ENCODE measurements at regions of chr6 and their contacts with region 1.

Region 1: DNA sequence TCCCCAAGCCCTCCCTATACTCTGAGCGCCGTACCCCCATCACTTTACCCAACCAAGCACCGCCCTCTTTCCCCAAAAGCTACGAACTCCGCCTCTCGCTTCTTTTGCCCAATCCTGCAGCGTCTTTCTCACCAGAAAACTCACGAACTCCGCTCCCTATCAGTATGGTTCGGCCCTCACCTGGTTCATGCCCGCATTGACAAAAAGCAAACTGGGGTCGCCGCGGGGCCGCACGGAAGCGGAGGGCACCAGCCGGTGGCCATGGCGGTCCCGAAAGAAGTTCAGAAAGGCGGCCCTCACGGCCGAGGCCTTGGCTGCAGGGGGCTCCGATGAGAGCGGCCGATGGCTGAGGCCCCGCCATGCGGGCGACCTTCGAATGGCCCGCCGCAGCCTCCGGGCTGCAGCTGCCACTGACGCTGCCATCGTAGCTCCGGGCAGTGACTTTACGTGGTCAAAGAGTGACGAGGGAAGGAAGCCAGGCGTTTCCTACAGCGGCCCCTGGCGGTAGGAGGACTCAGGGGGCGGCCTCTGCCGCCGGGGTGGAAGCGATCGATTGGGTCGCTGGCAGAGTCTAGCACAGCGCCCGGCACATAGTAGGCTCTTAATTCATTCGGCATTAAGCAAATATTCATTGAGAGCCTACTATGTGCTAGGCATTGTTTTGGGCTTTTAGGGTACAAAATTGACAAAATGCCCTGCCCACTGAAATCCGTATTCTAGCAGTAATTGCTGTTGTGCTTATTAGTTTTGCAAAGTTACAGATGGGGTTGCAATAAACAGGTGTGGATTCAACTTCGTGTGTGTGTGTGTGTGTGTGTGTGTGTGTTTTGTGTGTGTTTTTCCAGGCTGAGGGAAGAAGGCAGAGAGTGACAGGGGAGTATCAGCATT is at the start of gene AARS2:
- DNase-seq: peak; percentile 56 to 82
- ATAC-seq: peak; percentile 98 to 99
- H3K4me3 ChIP-seq: peak within 1 kb of the TSS; percentile 76
- H3K27ac ChIP-seq: peak within 1 kb of the TSS; percentile 80 to 99
- H3K4me1 ChIP-seq: peaks cover 7% of the 10 kb centered on the region; the same call in 2 of the 3 replicates
- CTCF ChIP-seq: peak; percentile 79
- EP300 ChIP-seq: no peak
- POLR2A ChIP-seq: peak; percentile 85
- RAD21 ChIP-seq: no peak; a peak in 1 of 5 replicates
- polyA plus RNA-seq, gene AARS2: 4.0 and 4.3 TPM in 2 replicates

Region 2: DNA sequence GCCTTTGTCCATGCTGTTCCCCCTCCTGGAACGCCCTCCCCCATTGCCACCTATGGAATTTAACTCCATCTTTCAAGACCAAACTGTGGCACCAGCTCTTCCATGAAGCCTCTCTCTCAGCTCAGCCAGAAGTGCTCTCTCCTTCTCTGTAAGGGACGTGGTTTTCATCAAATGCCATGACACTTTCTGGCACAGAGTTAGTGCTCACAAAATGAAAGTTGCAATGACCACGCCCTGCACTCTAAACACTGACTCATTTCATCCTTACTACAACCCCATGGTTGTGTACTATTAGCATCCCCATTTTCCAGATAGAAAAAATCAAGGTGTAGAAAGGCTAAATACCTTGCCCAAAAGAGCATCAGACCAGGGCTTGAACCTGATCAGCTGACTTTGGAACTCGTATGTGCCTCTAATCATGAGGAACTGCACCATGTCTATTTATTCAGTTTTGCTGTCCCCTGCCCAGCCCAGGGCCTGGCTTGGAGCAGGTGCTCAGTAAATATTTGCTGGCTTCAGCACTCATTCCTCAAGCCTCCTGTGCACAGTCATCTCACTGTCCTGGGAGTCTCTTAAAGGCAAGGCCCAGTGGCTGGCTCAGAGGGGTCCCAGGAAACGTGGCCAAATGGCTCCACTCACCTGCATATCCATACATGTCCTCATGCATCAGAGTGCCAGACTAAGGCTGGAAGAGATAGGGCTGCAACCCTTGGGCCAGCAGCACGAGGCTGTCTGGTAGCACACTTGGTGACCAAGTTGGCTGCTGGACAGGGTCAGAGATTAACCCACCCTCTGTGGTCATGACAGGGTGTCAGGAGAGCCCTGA is 263.8 kb before region 1 on chr6:
- CTCF ChIA-PET with region 1: no interaction called
- POLR2A ChIA-PET with region 1: no interaction called
- DNase-seq: no peak
- ATAC-seq: no peak
- H3K4me3 ChIP-seq: no peak overlapping the region
- H3K27ac ChIP-seq: peak overlapping the region; percentile 89 to 97
- H3K4me1 ChIP-seq: peaks cover 93% of the 10 kb centered on the region
- CTCF ChIP-seq: no peak
- EP300 ChIP-seq: no peak
- POLR2A ChIP-seq: no peak
- RAD21 ChIP-seq: no peak

Region 3: GRCh38 chr6:44201638-44202303 is 111.4 kb before region 1 on chr6:
- CTCF ChIA-PET with region 1: no interaction called
- POLR2A ChIA-PET with region 1: no interaction called
- DNase-seq: no peak
- ATAC-seq: no peak
- H3K4me3 ChIP-seq: no peak overlapping the region
- H3K27ac ChIP-seq: no peak overlapping the region
- H3K4me1 ChIP-seq: peaks cover 12% of the 10 kb centered on the region
- CTCF ChIP-seq: no peak
- EP300 ChIP-seq: no peak
- POLR2A ChIP-seq: no peak
- RAD21 ChIP-seq: no peak

Region 4: GRCh38 chr6:44291841-44292240 is 21.3 kb before region 1 on chr6:
- CTCF ChIA-PET with region 1: interaction called, 11 read pairs
- POLR2A ChIA-PET with region 1: no interaction called
- DNase-seq: no peak
- ATAC-seq: peak in 1 of 2 experiments; percentile 49; a peak in 2 of 6 replicates
- H3K4me3 ChIP-seq: no peak overlapping the region
- H3K27ac ChIP-seq: no peak overlapping the region
- H3K4me1 ChIP-seq: no peaks in the 10 kb centered on the region
- CTCF ChIP-seq: no peak
- EP300 ChIP-seq: no peak
- POLR2A ChIP-seq: no peak
- RAD21 ChIP-seq: no peak